AG04450 (cell line): ENCODE measurements at regions of chr16 and their contacts with region 1.

Region 1: GRCh38 chr16:16861546-16861945 is 482.6 kb downstream of the NPIPA7 start:
- DNase-seq: peak; percentile 0
- H3K4me3 ChIP-seq: no peak overlapping the region
- H3K27ac ChIP-seq: no peak overlapping the region
- H3K27me3 ChIP-seq: no peaks in the 10 kb centered on the region
- CTCF ChIP-seq: peak; percentile 72

Region 2: GRCh38 chr16:16778332-16778731 is 83.2 kb before region 1 on chr16:
- CTCF ChIA-PET with region 1: no interaction called
- POLR2A ChIA-PET with region 1: no interaction called
- DNase-seq: no peak
- H3K4me3 ChIP-seq: no peak overlapping the region
- H3K27ac ChIP-seq: no peak overlapping the region
- H3K27me3 ChIP-seq: no peaks in the 10 kb centered on the region
- CTCF ChIP-seq: no peak

Region 3: DNA sequence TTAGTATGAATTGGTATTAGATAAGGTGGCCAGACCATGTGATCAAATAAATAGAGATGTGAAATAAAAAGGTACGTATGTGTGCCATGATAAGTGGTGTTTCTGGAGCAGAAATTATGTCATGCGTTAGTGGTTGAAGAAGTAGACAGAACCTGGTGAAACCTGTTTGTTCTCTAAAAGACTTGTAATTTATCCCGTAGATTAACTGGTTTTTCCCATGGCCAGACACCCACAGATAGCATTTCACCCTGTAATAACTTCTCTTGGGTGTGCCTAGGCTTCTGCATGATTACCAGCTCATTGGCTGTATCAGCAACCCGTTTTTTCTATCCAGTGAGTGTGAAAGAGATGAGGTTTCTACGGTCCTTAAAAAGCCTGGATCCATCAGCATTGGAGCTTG is 11.3 kb before region 1 on chr16:
- CTCF ChIA-PET with region 1: interaction called, 12 read pairs
- POLR2A ChIA-PET with region 1: no interaction called
- DNase-seq: no peak
- H3K4me3 ChIP-seq: no peak overlapping the region
- H3K27ac ChIP-seq: no peak overlapping the region
- H3K27me3 ChIP-seq: no peaks in the 10 kb centered on the region
- CTCF ChIP-seq: no peak

Region 4: DNA sequence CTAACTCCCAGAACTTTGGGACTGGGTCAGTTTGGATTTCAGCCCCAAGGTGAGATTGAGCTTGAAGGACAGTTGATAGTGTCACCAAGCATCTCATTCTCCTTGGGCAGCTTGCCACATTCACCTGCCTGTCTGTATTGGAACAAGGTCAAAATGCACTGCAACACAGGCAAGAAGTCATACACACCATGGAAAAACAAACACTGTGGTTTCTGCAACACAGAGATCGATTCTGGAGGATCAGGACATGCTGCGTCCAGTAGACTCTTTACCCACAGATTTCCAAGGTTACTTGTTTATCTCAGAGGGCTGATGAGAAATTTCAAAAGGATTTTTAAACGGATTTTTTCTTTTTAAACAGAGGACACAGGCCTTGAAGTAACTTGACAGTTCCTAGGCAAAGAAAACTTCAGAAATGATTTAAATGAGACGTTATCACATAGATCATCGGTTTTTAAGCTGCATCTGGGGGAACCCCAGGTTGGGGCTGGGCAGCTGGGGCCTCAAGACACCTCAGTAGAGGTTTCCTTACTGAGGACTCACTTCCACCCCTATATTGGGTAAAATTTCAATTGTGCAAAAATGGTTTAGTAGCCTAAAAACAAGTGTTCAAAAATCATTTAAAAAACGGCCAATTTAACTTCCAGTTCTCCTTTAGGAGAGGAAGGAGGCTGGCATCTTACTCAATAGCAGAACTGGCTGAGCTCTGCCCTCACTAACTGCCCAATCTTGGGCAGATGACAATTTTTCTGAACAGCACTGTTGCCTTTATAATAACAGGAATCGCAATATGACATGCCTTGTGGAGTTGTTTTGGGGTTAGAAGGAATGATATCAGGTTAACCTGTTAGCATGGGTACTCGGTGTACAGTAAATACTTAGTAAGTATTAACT is 310.0 kb after region 1 on chr16:
- CTCF ChIA-PET with region 1: no interaction called
- POLR2A ChIA-PET with region 1: no interaction called
- DNase-seq: no peak
- H3K4me3 ChIP-seq: no peak overlapping the region
- H3K27ac ChIP-seq: no peak overlapping the region
- H3K27me3 ChIP-seq: no peaks in the 10 kb centered on the region
- CTCF ChIP-seq: no peak

Region 5: GRCh38 chr16:17448640-17449638 is 587.4 kb after region 1 on chr16:
- CTCF ChIA-PET with region 1: interaction called, 12 read pairs
- POLR2A ChIA-PET with region 1: no interaction called
- DNase-seq: no peak
- H3K4me3 ChIP-seq: no peak overlapping the region
- H3K27ac ChIP-seq: no peak overlapping the region
- H3K27me3 ChIP-seq: no peaks in the 10 kb centered on the region
- CTCF ChIP-seq: no peak